Heart left ventricle (tissue), 16 donors: ENCODE measurements at regions of chr4 and their contacts with region 1.

Region 1: GRCh38 chr4:47562297-47562696 is 77.2 kb downstream of the ATP10D start:
- DNase-seq: no peak
- ATAC-seq: no peak
- H3K4me3 ChIP-seq: no peak overlapping the region
- H3K27ac ChIP-seq: no peak overlapping the region
- H3K4me1 ChIP-seq: peaks cover 0 to 3% (median 0%) of the 10 kb centered on the region in 12 donors
- H3K27me3 ChIP-seq: no peaks in the 10 kb centered on the region
- CTCF ChIP-seq: no peak
- POLR2A ChIP-seq: no peak

Region 2: DNA sequence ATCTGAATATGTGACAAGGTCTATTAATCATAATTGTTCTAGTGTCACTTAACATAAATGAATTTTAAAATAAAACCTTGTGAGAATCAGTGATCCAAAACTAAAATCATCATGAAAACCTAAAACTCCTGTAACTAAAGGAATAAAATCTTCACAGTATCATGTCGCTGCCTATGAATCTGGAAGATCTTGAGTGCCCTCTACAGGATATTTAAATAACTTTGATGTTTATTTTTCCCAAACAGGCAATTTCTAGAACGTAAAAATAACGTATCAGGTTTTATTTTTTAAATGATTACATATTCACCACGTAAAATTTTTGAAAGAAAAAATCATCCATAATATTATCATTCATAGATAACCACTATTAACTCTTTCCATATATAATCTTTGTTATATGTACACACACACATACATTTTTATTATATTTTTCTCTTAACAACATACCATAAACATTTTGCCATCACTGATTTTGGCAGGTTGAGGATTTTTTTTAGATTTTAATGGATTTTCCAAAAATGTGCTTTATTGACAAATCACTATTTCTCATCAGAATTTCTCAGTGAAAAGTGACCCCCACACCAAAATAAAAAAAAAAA is 178.4 kb before region 1 on chr4:
- intact Hi-C with region 1: no loop called
- DNase-seq: no peak
- ATAC-seq: no peak
- H3K4me3 ChIP-seq: no peak overlapping the region
- H3K27ac ChIP-seq: no peak overlapping the region
- H3K4me1 ChIP-seq: no peaks in the 10 kb centered on the region
- H3K27me3 ChIP-seq: no peaks in the 10 kb centered on the region
- CTCF ChIP-seq: peak in 11 of 12 donors; percentile 26 to 73 (median 53)
- POLR2A ChIP-seq: no peak

Region 3: DNA sequence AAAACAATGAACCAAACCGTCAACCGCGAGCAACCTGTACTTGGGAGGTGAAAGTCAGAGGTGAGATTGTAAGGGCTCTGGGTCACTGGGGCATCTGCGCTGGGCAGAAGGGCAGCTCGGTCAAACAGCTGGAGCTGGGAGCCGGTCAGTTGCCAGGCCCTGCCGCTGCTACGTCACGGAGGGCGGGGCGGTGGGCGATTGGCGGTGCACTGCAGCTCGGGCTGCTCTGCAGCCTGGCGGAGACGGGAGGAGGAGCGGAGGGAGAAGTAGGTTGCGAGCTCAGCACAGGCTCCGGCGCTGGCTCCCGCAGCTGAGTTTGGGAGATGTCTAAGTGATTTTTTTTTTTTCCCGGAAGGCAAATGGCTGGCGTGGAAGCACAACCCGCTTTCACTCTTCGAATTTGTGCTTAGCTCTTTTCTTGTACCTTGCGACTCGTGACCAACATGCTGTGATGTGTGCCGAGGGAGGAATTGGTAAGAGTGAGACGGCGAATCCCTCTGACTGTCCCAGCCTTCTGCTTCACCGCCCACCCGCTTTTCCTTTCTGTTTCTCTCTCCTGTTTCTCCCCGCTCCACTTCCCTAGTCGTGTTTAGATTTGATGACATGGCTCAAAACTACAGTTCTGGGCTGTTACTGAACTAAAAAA is 77.1 kb before region 1 on chr4 and contains the start of gene ATP10D:
- intact Hi-C with region 1: loop called in 3 of 10 experiments (anchors 5 to 10 kb)
- DNase-seq: peak; percentile 96 to 98 (median 98)
- ATAC-seq: peak; percentile 99 to 100 (median 100)
- H3K4me3 ChIP-seq: peak within 1 kb of the TSS; percentile 40 to 76 (median 68)
- H3K27ac ChIP-seq: peak within 1 kb of the TSS; percentile 62 to 94 (median 92)
- H3K4me1 ChIP-seq: peaks cover 0 to 38% (median 12%) of the 10 kb centered on the region in 12 donors
- H3K27me3 ChIP-seq: no peaks in the 10 kb centered on the region
- CTCF ChIP-seq: peak in 4 of 12 donors; percentile 24 to 50 (median 38)
- POLR2A ChIP-seq: peak in 1 of 2 donors; percentile 90
- total RNA-seq, gene ATP10D: 5.4 to 22.1 (median 8.1) TPM

Region 4: GRCh38 chr4:47490550-47490949 is 71.7 kb before region 1 on chr4:
- intact Hi-C with region 1: loop called in 5 of 10 experiments (anchors 2 to 10 kb)
- DNase-seq: peak in 3 of 5 donors; percentile 22 to 39 (median 31)
- ATAC-seq: peak in 3 of 4 donors; percentile 80 to 90 (median 83)
- H3K4me3 ChIP-seq: no peak overlapping the region
- H3K27ac ChIP-seq: no peak overlapping the region
- H3K4me1 ChIP-seq: peaks cover 0 to 42% (median 25%) of the 10 kb centered on the region in 12 donors
- H3K27me3 ChIP-seq: no peaks in the 10 kb centered on the region
- CTCF ChIP-seq: peak; percentile 16 to 65 (median 39)
- POLR2A ChIP-seq: no peak

Region 5: DNA sequence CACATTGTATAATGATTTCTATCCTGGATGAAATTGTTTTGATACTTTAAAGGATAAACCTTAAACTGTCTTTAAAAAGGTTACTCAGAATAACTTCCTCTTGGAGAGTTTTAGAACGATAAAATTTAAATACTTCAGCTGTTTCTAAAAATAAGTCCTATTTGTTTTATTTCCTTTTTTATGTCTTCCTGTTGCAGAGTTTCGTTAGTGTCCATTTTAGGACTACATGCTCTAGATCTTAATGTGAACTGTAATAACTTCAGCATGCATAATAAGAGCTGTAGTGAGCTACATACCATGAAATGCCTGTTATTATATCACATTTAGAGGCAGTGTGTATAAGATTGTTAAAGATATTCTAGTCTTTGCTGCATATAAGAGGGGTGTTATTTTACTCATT is 62.6 kb before region 1 on chr4:
- intact Hi-C with region 1: loop called in 3 of 10 experiments (anchors 5 kb)
- DNase-seq: no peak
- ATAC-seq: no peak
- H3K4me3 ChIP-seq: no peak overlapping the region
- H3K27ac ChIP-seq: peak overlapping the region in 7 of 12 donors; percentile 1 to 56 (median 33)
- H3K4me1 ChIP-seq: peaks cover 0 to 32% (median 14%) of the 10 kb centered on the region in 12 donors
- H3K27me3 ChIP-seq: no peaks in the 10 kb centered on the region
- CTCF ChIP-seq: no peak
- POLR2A ChIP-seq: no peak